SK-N-SH (cell line): ENCODE measurements at regions of chr2 and their contacts with region 1.

Region 1: GRCh38 chr2:231411831-231412617 is 16.5 kb downstream of the B3GNT7 start:
- DNase-seq: peak; percentile 97
- H3K4me3 ChIP-seq: peak overlapping the region; percentile 64 to 70
- H3K27ac ChIP-seq: peak overlapping the region; percentile 16 to 40; a peak in 2 of 4 replicates
- H3K4me1 ChIP-seq: peaks cover 3% of the 10 kb centered on the region in 2 experiments; a peak in 1 of 4 replicates
- H3K27me3 ChIP-seq: no peaks in the 10 kb centered on the region
- CTCF ChIP-seq: peak; percentile 94
- EP300 ChIP-seq: no peak
- RAD21 ChIP-seq: peak; percentile 95

Region 2: DNA sequence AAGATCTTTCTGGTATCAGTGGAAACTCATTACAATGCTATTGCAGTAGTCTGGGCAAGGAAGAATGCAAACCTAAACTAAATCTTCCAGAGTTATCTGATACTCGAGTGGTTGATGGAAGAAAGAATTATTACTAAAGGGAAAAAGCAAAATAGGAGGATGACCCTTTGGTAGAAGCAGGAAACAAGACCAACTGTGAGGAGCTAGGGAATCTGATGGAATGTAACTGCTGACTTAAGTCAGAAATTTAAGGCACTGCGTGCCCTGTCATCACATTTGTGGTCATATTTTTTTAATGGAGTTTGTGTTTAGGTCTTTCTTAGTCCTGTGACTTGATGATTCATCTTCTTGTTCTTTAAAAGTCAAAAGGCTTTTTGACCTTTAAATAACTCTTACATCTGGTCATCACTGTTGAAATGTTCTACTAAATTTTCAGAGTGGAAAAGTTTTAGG is 250.1 kb before region 1 on chr2:
- CTCF ChIA-PET with region 1: no interaction called
- POLR2A ChIA-PET with region 1: no interaction called
- DNase-seq: no peak
- H3K4me3 ChIP-seq: no peak overlapping the region
- H3K27ac ChIP-seq: peak overlapping the region; percentile 65 to 98
- H3K4me1 ChIP-seq: peaks cover 6 to 21% of the 10 kb centered on the region in 2 experiments
- H3K27me3 ChIP-seq: no peaks in the 10 kb centered on the region
- CTCF ChIP-seq: no peak
- EP300 ChIP-seq: peak; percentile 59 to 89
- RAD21 ChIP-seq: no peak

Region 3: DNA sequence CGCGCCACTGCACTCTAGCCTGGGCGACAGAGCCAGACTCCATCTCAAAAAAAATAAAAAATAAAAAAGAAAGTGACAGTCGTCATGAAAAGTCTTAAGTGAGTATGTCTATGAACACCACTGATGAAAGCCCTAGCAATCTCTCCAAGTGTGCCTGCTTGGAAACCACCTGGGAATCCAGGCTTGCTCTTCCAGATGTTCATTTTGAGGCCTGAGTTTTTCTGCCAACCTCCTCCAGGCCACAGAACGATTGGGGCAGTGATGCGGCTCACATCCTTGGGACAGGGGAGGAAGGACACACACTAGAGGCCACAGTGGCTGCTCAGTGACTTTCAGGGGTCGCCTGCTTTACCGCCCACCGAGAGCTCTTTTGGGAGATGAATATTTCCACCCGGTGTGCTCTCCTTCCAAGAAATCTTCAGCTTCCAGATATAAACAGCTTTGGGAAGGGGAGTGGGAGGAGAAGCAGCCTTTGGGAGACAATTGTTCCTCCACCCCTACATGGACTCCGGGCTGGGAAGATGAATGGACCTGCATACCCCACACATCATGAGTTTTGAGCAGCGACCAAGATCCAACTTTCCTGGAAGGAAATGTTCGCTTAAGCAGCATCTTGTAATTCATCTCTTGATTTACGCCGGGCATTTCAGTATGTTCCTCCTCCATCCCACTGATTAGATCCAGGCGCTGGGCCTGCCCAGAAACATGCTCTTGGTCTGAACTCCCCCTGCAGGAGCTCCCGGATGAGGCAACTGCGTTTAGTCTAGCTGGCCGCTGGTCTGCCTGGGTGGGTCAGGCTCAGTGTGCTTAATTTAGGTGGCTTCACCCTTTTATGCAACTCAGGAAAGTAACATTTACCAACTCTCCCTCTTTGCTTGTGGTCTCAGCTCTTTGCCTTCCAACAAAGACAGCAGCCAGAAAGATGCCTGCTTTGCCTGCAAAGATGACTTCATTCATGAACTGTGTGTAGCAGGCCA is 219.8 kb before region 1 on chr2:
- CTCF ChIA-PET with region 1: interaction called, 15 read pairs
- POLR2A ChIA-PET with region 1: no interaction called
- DNase-seq: peak; percentile 89
- H3K4me3 ChIP-seq: no peak overlapping the region
- H3K27ac ChIP-seq: peak overlapping the region; percentile 29 to 70; a peak in 3 of 4 replicates
- H3K4me1 ChIP-seq: peaks cover 7 to 15% of the 10 kb centered on the region in 2 experiments; a peak in 1 of 4 replicates
- H3K27me3 ChIP-seq: no peaks in the 10 kb centered on the region
- CTCF ChIP-seq: peak; percentile 81
- EP300 ChIP-seq: peak in 1 of 2 experiments; percentile 36; a peak in 1 of 4 replicates
- RAD21 ChIP-seq: peak; percentile 94

Region 4: GRCh38 chr2:231238689-231239088 is 173.3 kb before region 1 on chr2:
- CTCF ChIA-PET with region 1: interaction called, 10 read pairs
- POLR2A ChIA-PET with region 1: no interaction called
- DNase-seq: no peak
- H3K4me3 ChIP-seq: no peak overlapping the region
- H3K27ac ChIP-seq: no peak overlapping the region
- H3K4me1 ChIP-seq: no peaks in the 10 kb centered on the region
- H3K27me3 ChIP-seq: no peaks in the 10 kb centered on the region
- CTCF ChIP-seq: no peak
- EP300 ChIP-seq: no peak
- RAD21 ChIP-seq: no peak

Region 5: GRCh38 chr2:231280846-231281245 is 131.2 kb before region 1 on chr2:
- CTCF ChIA-PET with region 1: interaction called, 30 read pairs
- POLR2A ChIA-PET with region 1: no interaction called
- DNase-seq: no peak
- H3K4me3 ChIP-seq: no peak overlapping the region
- H3K27ac ChIP-seq: no peak overlapping the region
- H3K4me1 ChIP-seq: no peaks in the 10 kb centered on the region
- H3K27me3 ChIP-seq: no peaks in the 10 kb centered on the region
- CTCF ChIP-seq: no peak
- EP300 ChIP-seq: no peak
- RAD21 ChIP-seq: no peak

Region 6: GRCh38 chr2:231387904-231388724 is 23.9 kb before region 1 on chr2:
- CTCF ChIA-PET with region 1: no interaction called
- POLR2A ChIA-PET with region 1: no interaction called
- DNase-seq: peak; percentile 70
- H3K4me3 ChIP-seq: no peak overlapping the region
- H3K27ac ChIP-seq: peak overlapping the region; percentile 16 to 32; a peak in 2 of 4 replicates
- H3K4me1 ChIP-seq: peaks cover 6 to 34% of the 10 kb centered on the region in 2 experiments; a peak in 2 of 4 replicates
- H3K27me3 ChIP-seq: no peaks in the 10 kb centered on the region
- CTCF ChIP-seq: no peak
- EP300 ChIP-seq: no peak
- RAD21 ChIP-seq: no peak; the same call in 1 of the 2 replicates

Region 7: DNA sequence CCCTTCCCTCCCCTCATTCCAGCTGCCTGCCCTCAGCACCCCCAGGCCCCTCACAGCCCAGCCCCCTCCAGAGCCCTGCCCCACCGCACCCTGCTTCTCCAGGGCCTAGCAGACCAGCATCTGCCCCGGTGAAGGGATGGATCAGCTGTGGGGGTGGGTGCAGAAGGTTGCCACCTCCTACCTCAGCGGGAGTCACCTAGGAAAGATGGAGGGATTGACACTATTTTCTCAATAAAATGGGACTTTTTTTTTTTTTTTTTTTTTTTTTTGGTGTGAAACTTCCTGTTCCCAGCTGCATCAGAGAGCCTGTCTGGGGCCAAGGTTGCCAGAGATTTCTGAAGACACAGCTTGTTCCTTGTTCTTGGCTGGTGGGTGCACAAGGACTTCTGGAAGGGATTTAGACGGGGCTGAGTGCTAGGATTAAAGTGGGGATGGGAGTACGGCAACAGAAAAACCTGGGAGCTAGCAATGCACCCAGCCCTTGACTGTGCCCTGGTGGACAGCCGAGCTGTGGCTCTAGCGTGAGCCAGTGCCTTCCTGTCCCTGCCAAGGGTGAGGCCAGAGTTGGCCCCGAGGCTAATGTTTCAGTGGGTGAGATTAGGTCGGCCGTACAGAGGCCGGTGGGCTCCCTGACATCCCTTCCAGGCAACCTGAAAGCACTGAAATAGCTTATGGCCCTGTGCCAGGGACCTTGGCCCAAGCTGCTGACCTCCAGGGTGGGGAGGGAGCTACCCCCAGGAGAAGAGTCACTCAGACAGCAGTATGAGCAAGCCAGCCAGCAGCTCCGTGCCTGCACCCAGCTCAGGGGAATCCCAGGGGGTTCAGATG is 12.0 kb before region 1 on chr2:
- CTCF ChIA-PET with region 1: interaction called, 54 read pairs
- POLR2A ChIA-PET with region 1: interaction called, 7 read pairs
- DNase-seq: peak; percentile 88
- H3K4me3 ChIP-seq: no peak overlapping the region
- H3K27ac ChIP-seq: peak overlapping the region in 1 of 2 experiments; percentile 72; a peak in 2 of 4 replicates
- H3K4me1 ChIP-seq: peaks cover 0 to 20% of the 10 kb centered on the region in 2 experiments; a peak in 1 of 4 replicates
- H3K27me3 ChIP-seq: no peaks in the 10 kb centered on the region
- CTCF ChIP-seq: no peak
- EP300 ChIP-seq: 0 out of 4 replicates have a peak, but pooled peaks of 1 of the 2 experiments have one; percentile 6
- RAD21 ChIP-seq: peak; percentile 47